IMR-90 (cell line): ENCODE measurements at regions of chr3 and their contacts with region 1.

Region 1: GRCh38 chr3:190224863-190225692 is 97.2 kb downstream of the CLDN1 start:
- DNase-seq: peak; percentile 42
- ATAC-seq: peak; percentile 40; the same call in 1 of the 2 replicates
- H3K4me3 ChIP-seq: no peak overlapping the region
- H3K27ac ChIP-seq: no peak overlapping the region
- H3K4me1 ChIP-seq: no peaks in the 10 kb centered on the region
- H3K27me3 ChIP-seq: no peaks in the 10 kb centered on the region
- CTCF ChIP-seq: peak; percentile 65
- POLR2A ChIP-seq: no peak
- RAD21 ChIP-seq: peak; percentile 68

Region 2: GRCh38 chr3:190155752-190156151 is 69.3 kb before region 1 on chr3:
- CTCF ChIA-PET with region 1: no interaction called
- POLR2A ChIA-PET with region 1: no interaction called
- dilution Hi-C with region 1: no loop called
- in situ Hi-C with region 1: no loop called
- intact Hi-C with region 1: no loop called
- DNase-seq: no peak
- ATAC-seq: no peak
- H3K4me3 ChIP-seq: no peak overlapping the region
- H3K27ac ChIP-seq: no peak overlapping the region
- H3K4me1 ChIP-seq: peaks cover 2% of the 10 kb centered on the region; the same call in 1 of the 2 replicates
- H3K27me3 ChIP-seq: peaks cover 3% of the 10 kb centered on the region; the same call in 1 of the 2 replicates
- CTCF ChIP-seq: no peak
- POLR2A ChIP-seq: no peak
- RAD21 ChIP-seq: no peak

Region 3: DNA sequence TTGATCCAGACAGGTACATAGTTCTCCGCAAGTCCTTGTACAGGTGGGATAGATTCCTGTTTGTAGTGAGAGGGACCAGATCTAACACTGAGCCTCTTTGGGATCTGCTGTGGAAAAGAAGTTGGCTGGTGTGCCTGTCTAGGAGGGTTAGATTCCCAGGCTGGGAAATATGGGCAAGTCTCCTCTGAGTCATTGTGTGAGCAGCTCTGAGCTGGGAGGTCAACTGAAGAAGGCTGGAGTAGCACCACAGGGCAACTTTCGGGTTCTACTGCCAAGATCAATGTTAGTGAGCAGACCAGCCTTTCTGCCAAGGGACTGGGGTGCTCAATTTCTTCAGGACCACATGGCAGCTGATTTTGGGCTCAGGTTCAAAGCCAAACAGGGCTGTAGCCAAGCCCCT is 63.8 kb after region 1 on chr3:
- CTCF ChIA-PET with region 1: no interaction called
- POLR2A ChIA-PET with region 1: no interaction called
- dilution Hi-C with region 1: no loop called
- in situ Hi-C with region 1: no loop called
- intact Hi-C with region 1: no loop called
- DNase-seq: peak; percentile 19
- ATAC-seq: peak; percentile 37; the same call in 1 of the 2 replicates
- H3K4me3 ChIP-seq: no peak overlapping the region
- H3K27ac ChIP-seq: no peak overlapping the region
- H3K4me1 ChIP-seq: no peaks in the 10 kb centered on the region
- H3K27me3 ChIP-seq: no peaks in the 10 kb centered on the region
- CTCF ChIP-seq: no peak
- POLR2A ChIP-seq: no peak
- RAD21 ChIP-seq: no peak

Region 4: GRCh38 chr3:190321789-190322603 is 96.9 kb after region 1 on chr3 and contains the start of gene CLDN1:
- CTCF ChIA-PET with region 1: interaction called, 22 read pairs
- POLR2A ChIA-PET with region 1: no interaction called
- dilution Hi-C with region 1: no loop called
- in situ Hi-C with region 1: loop called (anchors 5 kb)
- intact Hi-C with region 1: loop called (anchors 1 kb)
- DNase-seq: peak; percentile 69
- ATAC-seq: peak; percentile 93
- H3K4me3 ChIP-seq: peak within 1 kb of the TSS; percentile 66
- H3K27ac ChIP-seq: peak within 1 kb of the TSS; percentile 3; the same call in 1 of the 2 replicates
- H3K4me1 ChIP-seq: peaks cover 14% of the 10 kb centered on the region
- H3K27me3 ChIP-seq: no peaks in the 10 kb centered on the region
- CTCF ChIP-seq: peak; percentile 95
- POLR2A ChIP-seq: peak; percentile 63; the same call in 1 of the 2 replicates
- RAD21 ChIP-seq: peak; percentile 81
- total RNA-seq, gene CLDN1: 4.7 and 7.2 TPM in 2 replicates

Region 5: GRCh38 chr3:190384241-190384863 is 159.3 kb after region 1 on chr3:
- CTCF ChIA-PET with region 1: interaction called, 8 read pairs
- POLR2A ChIA-PET with region 1: no interaction called
- dilution Hi-C with region 1: no loop called
- in situ Hi-C with region 1: no loop called
- intact Hi-C with region 1: loop called (anchors 2 kb)
- DNase-seq: peak; percentile 69
- ATAC-seq: peak; percentile 21; the same call in 1 of the 2 replicates
- H3K4me3 ChIP-seq: no peak overlapping the region
- H3K27ac ChIP-seq: no peak overlapping the region
- H3K4me1 ChIP-seq: peaks cover 5% of the 10 kb centered on the region
- H3K27me3 ChIP-seq: no peaks in the 10 kb centered on the region
- CTCF ChIP-seq: peak; percentile 62
- POLR2A ChIP-seq: no peak
- RAD21 ChIP-seq: peak; percentile 62

Region 6: DNA sequence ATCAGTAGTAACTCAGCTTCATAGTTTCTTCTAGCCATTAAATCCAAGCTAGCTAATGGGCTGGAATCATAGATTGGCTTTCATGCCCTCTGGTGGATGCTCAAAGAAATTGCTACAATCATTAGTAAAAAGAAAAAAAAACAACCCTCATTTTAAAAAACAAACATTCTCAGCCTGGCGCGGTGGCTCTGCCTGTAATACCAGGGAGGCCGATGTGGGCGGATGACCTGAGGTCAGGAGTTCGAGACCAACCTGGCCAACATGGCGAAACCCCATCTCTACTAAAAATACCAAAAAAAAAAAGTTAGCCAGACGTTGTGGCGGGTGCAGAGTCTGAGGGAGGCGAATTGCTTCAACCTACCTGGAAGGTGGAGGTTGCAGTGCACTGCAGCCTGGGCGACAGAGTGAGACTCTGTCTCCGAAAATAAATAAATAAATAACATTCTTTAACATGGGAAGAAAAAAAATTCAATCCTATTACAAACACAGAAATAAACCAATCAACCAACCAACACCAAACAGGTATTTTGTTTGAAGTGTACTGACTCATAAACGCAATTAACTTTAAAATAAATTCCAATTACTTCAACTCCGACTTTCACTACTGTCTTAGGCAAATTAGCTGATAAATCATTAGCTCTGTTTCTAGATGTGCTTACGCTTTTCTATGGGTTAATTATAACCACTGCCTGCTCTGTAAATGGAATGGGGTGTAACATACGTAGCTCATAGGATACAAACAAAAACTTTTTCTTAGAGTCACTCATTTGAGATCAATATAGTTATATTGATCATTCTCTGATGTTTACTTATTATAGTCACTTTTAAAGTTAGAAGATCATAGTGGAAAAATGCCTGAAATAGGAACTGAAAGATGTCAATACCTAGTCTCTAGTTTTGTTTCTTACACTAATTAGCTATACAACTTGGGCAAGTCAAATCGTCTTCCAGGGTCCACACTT is 199.7 kb after region 1 on chr3:
- CTCF ChIA-PET with region 1: interaction called, 11 read pairs
- POLR2A ChIA-PET with region 1: no interaction called
- dilution Hi-C with region 1: no loop called
- in situ Hi-C with region 1: loop called (anchors 5 kb)
- intact Hi-C with region 1: loop called (anchors 1 kb)
- DNase-seq: peak; percentile 76
- ATAC-seq: peak; percentile 75
- H3K4me3 ChIP-seq: no peak overlapping the region
- H3K27ac ChIP-seq: no peak overlapping the region
- H3K4me1 ChIP-seq: no peaks in the 10 kb centered on the region
- H3K27me3 ChIP-seq: no peaks in the 10 kb centered on the region
- CTCF ChIP-seq: peak; percentile 75
- POLR2A ChIP-seq: no peak
- RAD21 ChIP-seq: peak; percentile 81

Region 7: DNA sequence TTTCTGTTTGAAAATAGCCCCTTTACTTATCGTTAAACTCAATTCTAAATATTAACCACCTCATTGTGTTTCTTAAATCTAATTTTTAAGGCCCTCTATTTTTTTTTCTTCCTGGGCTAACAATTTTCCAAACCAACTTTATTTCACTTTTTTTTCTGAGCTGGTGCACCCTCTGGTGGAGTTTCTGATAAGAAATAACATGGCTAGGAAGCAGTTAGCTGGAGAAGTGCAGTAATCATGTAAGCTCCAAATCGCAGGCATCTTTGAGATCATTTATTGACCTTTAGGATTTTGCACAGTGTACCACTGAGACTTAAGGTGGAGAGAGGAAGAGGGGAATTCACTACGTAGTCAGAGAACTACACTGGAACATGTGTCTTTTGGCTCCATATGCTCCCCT is 218.2 kb after region 1 on chr3:
- CTCF ChIA-PET with region 1: interaction called, 7 read pairs
- POLR2A ChIA-PET with region 1: no interaction called
- dilution Hi-C with region 1: no loop called
- in situ Hi-C with region 1: no loop called
- intact Hi-C with region 1: loop called (anchors 5 kb)
- DNase-seq: peak; percentile 44
- ATAC-seq: no peak
- H3K4me3 ChIP-seq: no peak overlapping the region
- H3K27ac ChIP-seq: no peak overlapping the region
- H3K4me1 ChIP-seq: no peaks in the 10 kb centered on the region
- H3K27me3 ChIP-seq: no peaks in the 10 kb centered on the region
- CTCF ChIP-seq: peak; percentile 52
- POLR2A ChIP-seq: no peak
- RAD21 ChIP-seq: peak; percentile 43

Region 8: DNA sequence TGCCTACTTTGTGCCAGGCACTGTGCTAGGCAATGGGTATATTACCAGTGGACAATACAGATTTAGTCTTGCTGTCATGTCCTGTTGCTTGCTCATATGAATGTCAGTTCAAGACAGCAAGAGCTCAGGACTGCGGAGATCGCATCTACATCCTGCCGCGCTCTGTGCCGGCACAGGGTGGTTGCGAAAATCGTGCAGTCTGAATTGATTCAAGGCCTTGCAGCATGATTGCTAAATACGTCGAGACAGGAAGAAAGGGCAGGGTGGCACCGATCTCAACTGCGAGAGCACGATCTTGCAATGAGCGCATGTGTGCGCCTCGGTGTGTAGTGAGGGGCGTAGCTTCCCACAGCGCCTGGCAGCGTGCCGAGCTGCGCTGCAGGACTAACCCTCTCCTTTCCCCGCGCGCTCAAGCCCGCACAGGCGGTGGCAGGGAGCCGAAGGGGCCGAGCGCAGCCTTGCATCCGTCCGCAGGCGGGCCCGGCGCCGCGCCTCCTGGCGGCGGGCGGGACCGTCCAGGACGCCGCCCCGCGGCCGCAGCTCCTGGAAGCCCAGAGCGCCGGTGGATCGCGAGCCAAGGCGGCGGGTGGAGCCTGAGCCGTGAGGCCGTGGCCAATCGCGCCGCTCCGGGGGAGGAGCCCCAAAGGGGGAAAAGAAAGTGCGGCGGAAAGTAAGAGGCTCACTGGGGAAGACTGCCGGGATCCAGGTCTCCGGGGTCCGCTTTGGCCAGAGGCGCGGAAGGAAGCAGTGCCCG is 288.5 kb after region 1 on chr3 and contains the start of gene IL1RAP:
- CTCF ChIA-PET with region 1: no interaction called
- POLR2A ChIA-PET with region 1: no interaction called
- dilution Hi-C with region 1: no loop called
- in situ Hi-C with region 1: no loop called
- intact Hi-C with region 1: loop called (anchors 5 kb)
- DNase-seq: peak; percentile 88
- ATAC-seq: peak; percentile 98
- H3K4me3 ChIP-seq: peak within 1 kb of the TSS; percentile 60
- H3K27ac ChIP-seq: peak within 1 kb of the TSS; percentile 60
- H3K4me1 ChIP-seq: peaks cover 7% of the 10 kb centered on the region; the same call in 1 of the 2 replicates
- H3K27me3 ChIP-seq: no peaks in the 10 kb centered on the region
- CTCF ChIP-seq: peak; percentile 77
- POLR2A ChIP-seq: peak; percentile 56
- RAD21 ChIP-seq: peak; percentile 46
- total RNA-seq, gene IL1RAP: 9.4 and 11.3 TPM in 2 replicates